CD14-positive monocyte (primary cell): ENCODE measurements at regions of chr12 and their contacts with region 1.

Region 1: DNA sequence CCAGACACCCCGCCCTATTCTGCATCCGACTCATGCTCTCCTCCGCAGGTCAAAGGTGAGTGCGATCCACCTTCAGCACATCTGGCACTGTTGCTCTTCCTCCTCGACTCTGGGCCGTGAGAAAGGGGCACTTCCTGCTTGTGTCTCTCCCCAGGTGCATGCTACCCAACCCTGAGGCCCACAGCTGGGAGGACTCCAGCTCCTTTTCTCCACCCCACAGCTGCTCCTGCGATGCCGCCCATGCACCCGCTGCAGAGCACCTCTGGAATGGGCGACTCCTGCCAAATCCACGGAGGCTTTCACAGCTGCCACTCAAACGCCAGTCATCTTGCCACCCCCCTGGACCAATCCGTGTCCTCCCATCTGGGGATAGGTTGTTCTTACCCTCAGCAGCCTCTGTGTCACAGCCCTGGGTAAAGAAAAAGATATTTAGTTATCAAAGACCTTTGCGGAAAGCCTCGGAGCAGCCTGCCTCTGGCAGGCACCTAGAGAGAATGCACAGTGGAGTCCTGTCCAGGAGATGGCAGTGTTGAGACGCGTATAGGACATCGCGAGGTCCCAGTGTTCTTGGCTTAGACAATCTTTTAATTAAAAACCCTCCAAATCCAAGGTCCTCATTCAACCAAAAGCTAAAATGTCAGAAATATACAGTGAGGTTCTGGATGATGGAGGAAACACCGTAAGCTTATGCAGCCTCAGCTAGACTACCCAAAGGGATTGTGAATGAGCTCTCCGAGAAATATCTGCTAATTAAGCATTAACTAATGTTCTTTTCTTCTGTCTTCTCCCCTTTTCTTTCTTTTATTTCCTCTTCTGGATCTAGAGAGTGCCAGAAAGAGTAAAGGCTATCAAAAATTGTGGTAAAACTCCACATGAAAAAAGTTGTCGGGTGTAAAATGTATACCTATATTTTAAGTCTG is 54.3 kb downstream of the MYRFL start:
- DNase-seq: peak; percentile 46 to 60 (median 60)
- H3K4me3 ChIP-seq: no peak overlapping the region
- H3K4me3 Mint-ChIP-seq: peak overlapping the region; percentile 5 to 13
- H3K27ac ChIP-seq: no peak overlapping the region
- H3K27ac Mint-ChIP-seq: no peak overlapping the region
- H3K4me1 ChIP-seq: peaks cover 4 to 7% of the 10 kb centered on the region in 2 donors
- H3K4me1 Mint-ChIP-seq: peaks cover 8% of the 10 kb centered on the region
- H3K27me3 ChIP-seq: no peaks in the 10 kb centered on the region
- H3K27me3 Mint-ChIP-seq: peaks cover 4 to 10% (median 9%) of the 10 kb centered on the region in 3 donors
- CTCF ChIP-seq: peak; percentile 90

Region 2: DNA sequence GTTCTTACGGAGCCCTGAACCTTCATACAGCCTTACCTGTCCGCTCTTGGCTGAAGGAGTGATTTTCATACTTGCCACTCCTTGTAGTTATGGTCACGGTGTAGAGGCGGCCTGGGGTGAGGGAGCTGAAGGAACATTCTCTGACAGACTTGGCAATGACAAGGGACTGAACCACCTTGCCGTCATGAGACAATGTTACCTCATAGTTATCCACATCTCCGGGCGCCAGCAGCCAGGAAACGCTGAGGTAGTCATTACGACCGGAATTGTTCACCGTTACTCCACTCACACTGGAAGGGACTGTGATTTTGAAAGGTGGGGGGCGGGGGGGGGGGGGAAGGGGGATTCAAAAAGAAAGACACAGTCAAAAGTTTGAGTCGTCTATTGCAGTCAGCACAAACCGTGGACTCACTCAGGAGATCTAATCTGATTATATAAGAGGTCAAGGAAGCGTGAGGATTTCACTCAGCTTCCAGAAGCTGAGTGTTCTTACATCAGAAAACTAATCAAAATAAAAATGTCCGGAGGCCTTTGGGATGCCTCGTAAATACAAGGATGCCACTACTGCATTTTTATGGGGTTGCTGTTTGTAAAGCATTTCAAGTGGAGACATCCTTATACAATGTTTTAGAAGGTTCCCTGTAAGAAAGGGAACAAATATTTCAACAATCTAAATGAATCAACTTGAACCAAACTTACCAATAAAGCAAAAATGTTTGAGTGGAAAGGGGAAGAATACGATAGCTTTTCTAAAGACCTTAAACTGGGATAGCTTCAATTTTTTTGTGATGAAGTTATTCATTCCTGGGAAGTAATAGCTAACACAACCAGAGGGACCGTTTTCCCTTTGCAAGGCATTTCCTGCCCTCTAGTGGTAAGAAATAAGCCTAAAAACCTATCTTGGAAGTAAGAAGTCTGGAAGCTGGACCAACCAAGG is 697.3 kb after region 1 on chr12:
- intact Hi-C with region 1: loop called (anchors 2 to 5 kb)
- DNase-seq: peak; percentile 21 to 47 (median 40)
- H3K4me3 ChIP-seq: no peak overlapping the region
- H3K4me3 Mint-ChIP-seq: no peak overlapping the region
- H3K27ac ChIP-seq: no peak overlapping the region
- H3K27ac Mint-ChIP-seq: no peak overlapping the region
- H3K4me1 ChIP-seq: no peaks in the 10 kb centered on the region
- H3K4me1 Mint-ChIP-seq: no peaks in the 10 kb centered on the region
- H3K27me3 ChIP-seq: no peaks in the 10 kb centered on the region
- H3K27me3 Mint-ChIP-seq: no peaks in the 10 kb centered on the region
- CTCF ChIP-seq: peak; percentile 78

Region 3: DNA sequence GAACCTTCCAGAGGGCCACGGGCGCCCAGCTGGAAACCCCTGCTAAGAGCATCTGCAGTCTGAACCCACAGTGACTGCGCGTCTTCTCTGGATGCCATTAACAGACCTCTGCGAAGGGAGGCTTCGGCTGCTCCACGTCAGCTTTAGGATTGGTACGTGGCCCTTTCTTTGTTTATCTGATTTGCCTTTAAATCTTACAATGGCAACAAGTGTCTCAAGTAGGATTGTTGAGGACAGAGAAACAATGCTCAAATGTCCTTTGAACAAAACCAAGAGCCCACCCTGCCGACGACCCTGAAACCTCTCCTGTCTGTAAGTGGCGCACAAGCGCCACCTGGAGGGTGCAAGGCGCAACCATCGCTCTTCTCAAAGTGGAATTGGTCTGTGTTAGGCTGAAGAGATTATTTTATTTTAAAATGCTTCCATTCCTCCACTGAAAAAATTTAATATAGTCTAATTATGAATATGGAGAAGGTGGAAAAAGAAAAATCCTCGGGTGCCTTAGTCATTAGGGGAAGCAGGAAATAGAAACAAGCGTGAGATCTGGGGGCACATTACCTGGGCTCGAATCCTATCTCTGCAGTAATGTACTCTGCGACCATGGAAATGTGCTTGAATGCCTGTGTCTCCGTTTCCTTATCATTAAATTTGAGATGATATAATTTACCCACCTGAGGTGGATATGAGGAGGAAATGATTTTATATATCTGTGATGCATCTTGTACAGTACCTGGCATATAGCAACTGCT is 840.5 kb after region 1 on chr12:
- intact Hi-C with region 1: loop called in 1 of 2 experiments (anchors 5 kb)
- DNase-seq: no peak
- H3K4me3 ChIP-seq: no peak overlapping the region
- H3K4me3 Mint-ChIP-seq: peak overlapping the region in 1 of 2 donors; percentile 76
- H3K27ac ChIP-seq: no peak overlapping the region
- H3K27ac Mint-ChIP-seq: no peak overlapping the region
- H3K4me1 ChIP-seq: peaks cover 0 to 6% of the 10 kb centered on the region in 2 donors
- H3K4me1 Mint-ChIP-seq: peaks cover 4% of the 10 kb centered on the region
- H3K27me3 ChIP-seq: peaks cover 7 to 15% of the 10 kb centered on the region in 2 donors
- H3K27me3 Mint-ChIP-seq: peaks cover 4 to 17% (median 5%) of the 10 kb centered on the region in 3 donors
- CTCF ChIP-seq: peak; percentile 88

Region 4: GRCh38 chr12:70733385-70733784 is 854.1 kb after region 1 on chr12:
- intact Hi-C with region 1: loop called in 1 of 2 experiments (anchors 5 kb)
- DNase-seq: peak in 1 of 3 donors; percentile 7
- H3K4me3 ChIP-seq: no peak overlapping the region
- H3K4me3 Mint-ChIP-seq: no peak overlapping the region
- H3K27ac ChIP-seq: no peak overlapping the region
- H3K27ac Mint-ChIP-seq: no peak overlapping the region
- H3K4me1 ChIP-seq: no peaks in the 10 kb centered on the region
- H3K4me1 Mint-ChIP-seq: no peaks in the 10 kb centered on the region
- H3K27me3 ChIP-seq: no peaks in the 10 kb centered on the region
- H3K27me3 Mint-ChIP-seq: peaks cover 0 to 4% (median 2%) of the 10 kb centered on the region in 3 donors
- CTCF ChIP-seq: peak; percentile 67